Endothelial cell of umbilical vein (primary cell): ENCODE measurements at regions of chr3 and their contacts with region 1.

Region 1: GRCh38 chr3:143972505-143973255 is 1.1 kb downstream of the DIPK2A start:
- DNase-seq: peak; percentile 85
- H3K4me3 ChIP-seq: peak overlapping the region; percentile 62 to 98 (median 81)
- H3K27ac ChIP-seq: peak overlapping the region; percentile 90
- H3K4me1 ChIP-seq: peaks cover 27% of the 10 kb centered on the region
- H3K27me3 ChIP-seq: no peaks in the 10 kb centered on the region
- CTCF ChIP-seq: peak; percentile 29 to 52
- POLR2A ChIP-seq: no peak

Region 2: GRCh38 chr3:143443851-143444331 is 528.8 kb before region 1 on chr3:
- CTCF ChIA-PET with region 1: no interaction called
- POLR2A ChIA-PET with region 1: no interaction called
- dilution Hi-C with region 1: no loop called
- intact Hi-C with region 1: loop called (anchors 5 kb)
- DNase-seq: peak; percentile 98
- H3K4me3 ChIP-seq: no peak overlapping the region
- H3K27ac ChIP-seq: peak overlapping the region; percentile 98
- H3K4me1 ChIP-seq: peaks cover 25% of the 10 kb centered on the region
- H3K27me3 ChIP-seq: no peaks in the 10 kb centered on the region
- CTCF ChIP-seq: no peak
- POLR2A ChIP-seq: peak; percentile 62

Region 3: GRCh38 chr3:143825513-143825912 is 147.2 kb before region 1 on chr3:
- CTCF ChIA-PET with region 1: no interaction called
- POLR2A ChIA-PET with region 1: no interaction called
- dilution Hi-C with region 1: no loop called
- intact Hi-C with region 1: no loop called
- DNase-seq: peak; percentile 23
- H3K4me3 ChIP-seq: no peak overlapping the region
- H3K27ac ChIP-seq: no peak overlapping the region
- H3K4me1 ChIP-seq: peaks cover 14% of the 10 kb centered on the region
- H3K27me3 ChIP-seq: no peaks in the 10 kb centered on the region
- CTCF ChIP-seq: no peak
- POLR2A ChIP-seq: no peak

Region 4: GRCh38 chr3:143885780-143886427 is 86.8 kb before region 1 on chr3:
- CTCF ChIA-PET with region 1: interaction called, 7 read pairs
- POLR2A ChIA-PET with region 1: no interaction called
- dilution Hi-C with region 1: no loop called
- intact Hi-C with region 1: loop called (anchors 5 kb)
- DNase-seq: peak; percentile 36
- H3K4me3 ChIP-seq: no peak overlapping the region
- H3K27ac ChIP-seq: no peak overlapping the region
- H3K4me1 ChIP-seq: peaks cover 9% of the 10 kb centered on the region
- H3K27me3 ChIP-seq: no peaks in the 10 kb centered on the region
- CTCF ChIP-seq: peak; percentile 58 to 60
- POLR2A ChIP-seq: no peak

Region 5: DNA sequence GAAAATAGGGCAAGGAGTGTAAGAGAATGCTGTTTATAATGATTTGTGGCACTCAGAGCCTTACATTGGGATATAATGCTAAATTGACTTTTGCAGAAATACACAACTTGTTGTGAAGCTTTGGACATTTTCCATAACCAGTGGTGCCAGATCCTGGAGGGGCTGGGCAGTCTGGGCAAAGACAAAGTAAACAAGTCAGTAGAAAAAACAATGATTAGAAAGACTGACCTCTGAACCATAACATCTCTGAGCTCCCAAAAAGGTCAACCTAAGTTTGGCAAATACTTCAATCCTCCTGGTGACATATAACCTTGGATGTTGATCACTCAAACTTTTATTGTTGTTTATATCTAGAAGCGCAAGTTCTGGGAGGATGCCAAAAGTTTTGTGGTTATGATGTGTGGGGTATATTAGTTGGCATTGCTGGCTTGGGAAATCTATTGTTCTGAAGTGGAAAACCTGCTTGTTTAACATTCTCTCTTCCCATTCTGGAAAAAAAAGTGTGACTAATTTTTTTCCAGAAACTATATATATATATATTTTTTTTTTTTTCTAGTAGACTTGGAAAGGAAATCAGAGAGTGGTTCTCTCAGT is 256.7 kb after region 1 on chr3:
- CTCF ChIA-PET with region 1: no interaction called
- POLR2A ChIA-PET with region 1: no interaction called
- dilution Hi-C with region 1: no loop called
- intact Hi-C with region 1: loop called (anchors 5 kb)
- DNase-seq: peak; percentile 93
- H3K4me3 ChIP-seq: no peak overlapping the region
- H3K27ac ChIP-seq: no peak overlapping the region
- H3K4me1 ChIP-seq: peaks cover 6% of the 10 kb centered on the region
- H3K27me3 ChIP-seq: no peaks in the 10 kb centered on the region
- CTCF ChIP-seq: no peak
- POLR2A ChIP-seq: no peak

Region 6: DNA sequence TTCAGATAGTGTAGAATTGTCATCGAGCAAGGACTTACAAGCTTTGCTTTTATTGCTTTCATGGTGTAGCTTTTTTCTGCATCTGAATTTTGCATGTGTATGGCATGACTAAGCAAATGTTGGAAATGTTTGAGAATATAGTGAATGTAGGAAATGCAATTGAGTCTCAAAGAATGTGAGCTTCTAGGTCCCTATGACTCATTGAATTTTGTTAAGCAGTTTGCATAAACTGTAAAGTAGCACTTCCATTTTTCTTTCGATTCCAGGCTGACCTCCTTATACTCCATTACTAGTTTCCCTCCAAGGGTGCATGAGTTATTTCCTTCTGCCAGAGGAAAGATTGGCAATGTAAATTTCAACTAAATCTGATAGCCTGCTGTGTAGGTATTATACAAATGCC is 618.2 kb after region 1 on chr3:
- CTCF ChIA-PET with region 1: interaction called, 4 read pairs
- POLR2A ChIA-PET with region 1: interaction called, 10 read pairs
- dilution Hi-C with region 1: no loop called
- intact Hi-C with region 1: loop called (anchors 1 kb)
- DNase-seq: peak; percentile 90
- H3K4me3 ChIP-seq: peak overlapping the region in 1 of 3 experiments; percentile 14
- H3K27ac ChIP-seq: peak overlapping the region; percentile 69
- H3K4me1 ChIP-seq: peaks cover 37% of the 10 kb centered on the region
- H3K27me3 ChIP-seq: no peaks in the 10 kb centered on the region
- CTCF ChIP-seq: no peak
- POLR2A ChIP-seq: no peak

Region 7: GRCh38 chr3:144831955-144832716 is 859.5 kb after region 1 on chr3:
- CTCF ChIA-PET with region 1: no interaction called
- POLR2A ChIA-PET with region 1: no interaction called
- dilution Hi-C with region 1: no loop called
- intact Hi-C with region 1: loop called (anchors 5 kb)
- DNase-seq: peak; percentile 90
- H3K4me3 ChIP-seq: no peak overlapping the region
- H3K27ac ChIP-seq: peak overlapping the region; percentile 28
- H3K4me1 ChIP-seq: peaks cover 18% of the 10 kb centered on the region
- H3K27me3 ChIP-seq: no peaks in the 10 kb centered on the region
- CTCF ChIP-seq: no peak
- POLR2A ChIP-seq: no peak

Region 8: GRCh38 chr3:145032791-145033190 is 1060.1 kb after region 1 on chr3:
- CTCF ChIA-PET with region 1: no interaction called
- POLR2A ChIA-PET with region 1: no interaction called
- dilution Hi-C with region 1: no loop called
- intact Hi-C with region 1: loop called (anchors 10 kb)
- DNase-seq: peak; percentile 50
- H3K4me3 ChIP-seq: no peak overlapping the region
- H3K27ac ChIP-seq: no peak overlapping the region
- H3K4me1 ChIP-seq: peaks cover 11% of the 10 kb centered on the region
- H3K27me3 ChIP-seq: no peaks in the 10 kb centered on the region
- CTCF ChIP-seq: no peak
- POLR2A ChIP-seq: no peak